AG04449 (cell line): ENCODE measurements at regions of chr1 and their contacts with region 1.

Region 1: DNA sequence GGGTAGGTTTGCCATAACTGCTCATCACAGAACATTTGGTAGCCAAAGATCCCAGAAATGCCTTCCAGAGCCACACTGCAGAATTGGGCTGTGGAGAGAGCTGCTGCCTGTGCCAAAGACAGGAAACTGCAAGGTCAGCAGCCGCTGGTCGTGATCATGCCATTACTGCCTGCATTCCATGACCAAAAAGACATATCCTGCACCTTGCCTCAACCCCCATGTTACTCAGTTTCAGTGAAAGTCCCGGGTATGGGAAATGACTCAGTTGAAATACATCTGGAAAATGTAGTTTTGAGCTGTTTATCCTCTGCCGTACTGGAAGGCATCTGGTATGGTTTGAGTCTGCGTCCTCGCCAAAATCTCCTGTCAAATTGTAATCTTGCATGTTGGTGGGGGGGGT is 161.7 kb downstream of the FCRL5 start:
- DNase-seq: peak; percentile 38
- H3K4me3 ChIP-seq: no peak overlapping the region
- CTCF ChIP-seq: no peak

Region 2: DNA sequence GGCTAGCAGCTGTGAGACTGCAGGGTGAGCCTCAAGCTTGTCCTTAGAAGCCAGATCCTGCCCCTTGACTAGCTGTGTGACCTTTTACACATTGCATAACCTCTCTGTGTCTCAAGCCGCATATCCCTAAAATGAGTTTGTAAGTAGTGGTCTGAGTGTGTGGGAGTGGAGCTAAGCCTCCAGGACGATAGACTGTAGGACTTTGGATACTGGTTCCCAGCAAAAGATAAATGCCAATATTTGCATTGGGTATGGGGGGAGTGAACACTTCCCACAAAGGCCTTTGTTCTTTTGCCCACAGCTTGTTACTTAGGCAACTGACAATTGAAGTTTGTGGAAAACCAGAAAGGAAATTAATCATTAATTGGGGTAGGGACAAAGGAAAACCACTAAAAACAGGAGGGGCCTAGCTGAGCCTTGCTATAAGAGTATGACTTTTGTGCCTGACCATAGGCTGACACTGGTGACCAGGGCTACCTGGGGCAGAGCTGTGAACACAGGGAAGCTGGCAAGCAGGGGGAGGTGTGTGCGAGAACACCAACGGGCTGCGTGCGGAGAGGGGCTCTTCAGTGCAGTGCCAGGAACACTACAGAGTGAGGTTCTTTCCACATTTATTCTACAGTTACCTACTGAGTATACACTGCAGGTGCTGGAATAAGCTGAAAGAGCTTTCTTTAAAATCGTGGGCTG is 150.0 kb before region 1 on chr1:
- CTCF ChIA-PET with region 1: no interaction called
- POLR2A ChIA-PET with region 1: no interaction called
- DNase-seq: no peak
- H3K4me3 ChIP-seq: no peak overlapping the region
- CTCF ChIP-seq: no peak

Region 3: DNA sequence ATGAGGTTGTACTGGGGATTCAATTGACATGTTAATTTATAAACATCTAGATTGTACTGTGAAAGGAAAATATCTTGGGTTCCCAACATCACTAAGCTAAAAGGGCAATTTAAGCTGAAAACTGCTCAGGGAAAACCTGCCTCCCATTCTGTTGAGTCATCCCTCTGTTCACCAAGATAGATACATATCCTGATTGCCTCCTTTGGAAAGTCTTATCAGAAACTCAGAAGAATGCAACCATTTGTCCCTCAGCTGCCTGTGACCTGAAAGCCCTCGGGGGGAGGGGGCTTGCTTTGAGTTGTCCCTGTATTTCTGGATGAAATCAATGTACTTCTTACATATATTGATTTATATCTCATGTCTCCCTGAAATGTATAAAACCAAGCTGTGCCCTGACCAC is 65.4 kb before region 1 on chr1:
- CTCF ChIA-PET with region 1: no interaction called
- POLR2A ChIA-PET with region 1: no interaction called
- DNase-seq: no peak
- H3K4me3 ChIP-seq: no peak overlapping the region
- CTCF ChIP-seq: no peak

Region 4: GRCh38 chr1:157380523-157380922 is 10.1 kb before region 1 on chr1:
- CTCF ChIA-PET with region 1: interaction called, 18 read pairs
- POLR2A ChIA-PET with region 1: no interaction called
- DNase-seq: no peak
- H3K4me3 ChIP-seq: no peak overlapping the region
- CTCF ChIP-seq: no peak